ENCODE measurements at regions of chr19 and their contacts with region 1.

Region 1: DNA sequence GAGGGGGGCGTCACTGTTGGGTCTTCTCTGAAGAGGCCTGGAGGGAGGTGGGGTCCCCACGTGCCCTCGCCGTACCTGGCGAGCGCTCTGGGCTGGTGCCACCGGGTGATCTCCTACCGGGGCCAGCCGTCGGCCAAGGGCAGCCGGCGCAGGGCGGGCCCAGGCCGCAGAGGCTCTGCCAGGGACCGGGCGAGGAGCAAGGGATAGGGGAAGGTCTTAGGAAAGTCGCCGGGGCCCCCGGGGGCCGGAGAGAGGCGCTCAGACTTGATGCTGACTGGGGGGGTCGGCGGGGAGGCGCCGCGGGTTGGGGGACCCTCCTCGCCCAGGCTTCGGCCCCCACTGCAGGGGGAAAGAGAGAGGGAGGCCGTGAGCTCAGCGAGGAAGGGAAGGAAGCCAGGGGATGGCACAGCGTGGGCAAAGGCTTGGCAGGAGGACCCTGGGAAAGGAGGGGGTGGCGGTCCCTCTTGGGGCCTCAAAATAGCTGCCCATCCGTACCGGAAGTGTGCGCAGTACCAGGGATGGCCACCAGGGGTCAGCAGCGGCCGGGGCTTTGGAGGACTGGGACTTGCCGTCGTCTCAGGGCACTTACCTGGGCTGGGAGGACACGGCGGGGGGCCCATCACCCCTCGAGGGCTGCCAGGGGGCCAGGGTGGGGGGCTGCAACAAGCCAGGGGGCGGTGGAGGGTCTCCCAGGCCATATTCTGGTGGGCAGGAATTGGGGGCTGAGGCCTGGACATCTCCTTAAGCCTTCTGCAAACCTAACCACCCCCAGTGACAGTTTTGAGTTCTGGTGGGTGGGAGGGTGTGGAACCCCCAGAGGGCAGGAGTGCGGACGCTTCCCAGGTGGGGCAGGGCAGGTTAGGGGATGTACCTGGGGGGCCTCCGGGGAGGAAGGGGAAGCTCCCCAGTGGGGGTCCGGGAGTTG is 7.7 kb upstream of the TMEM161A start:
- DNase-seq: peak; percentile 53

Region 2: GRCh38 chr19:19026299-19026971 is 119.5 kb before region 1 on chr19:
- in situ Hi-C with region 1: no loop called
- DNase-seq: peak; percentile 35

Region 3: DNA sequence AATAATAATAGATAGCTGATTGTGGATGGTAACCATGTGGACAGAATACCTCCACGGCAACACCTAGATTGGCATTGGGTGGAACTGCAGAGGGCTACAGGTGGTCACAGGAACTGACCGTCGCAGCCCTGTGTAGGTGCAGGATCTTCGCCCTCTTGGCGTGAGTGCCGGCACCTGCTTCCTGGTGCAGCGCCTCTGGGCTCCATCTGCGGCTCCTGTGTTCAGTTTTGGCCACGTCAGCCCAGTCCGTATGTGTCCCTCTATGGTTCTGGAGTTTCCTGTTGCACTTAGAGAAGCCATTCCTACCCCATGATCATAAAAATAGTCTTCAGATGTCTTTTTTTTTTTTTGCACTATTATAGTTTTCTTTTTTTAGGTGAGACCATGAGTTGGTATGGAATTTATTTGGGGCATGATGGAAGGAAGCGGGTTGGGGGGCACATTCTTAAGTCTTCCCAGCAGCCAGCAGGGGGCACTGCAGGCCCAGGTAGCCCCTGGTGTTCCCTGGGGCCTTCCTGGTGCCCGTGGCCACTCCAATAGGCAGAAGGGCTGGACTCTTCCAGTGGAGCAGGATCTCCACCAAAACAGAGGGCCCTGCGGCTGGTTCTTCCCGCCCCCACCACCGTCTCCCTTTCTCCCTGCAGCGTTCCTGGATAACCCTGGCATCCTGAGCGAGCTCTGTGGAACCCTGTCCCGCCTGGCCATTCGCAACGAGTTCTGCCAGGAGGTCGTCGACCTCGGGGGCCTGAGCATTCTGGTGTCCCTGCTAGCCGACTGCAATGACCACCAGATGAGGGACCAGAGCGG is 92.2 kb before region 1 on chr19:
- in situ Hi-C with region 1: loop called (anchors 10 kb)
- DNase-seq: peak; percentile 48